T-cell (primary cell): ENCODE measurements at regions of chr5 and their contacts with region 1.

Region 1: DNA sequence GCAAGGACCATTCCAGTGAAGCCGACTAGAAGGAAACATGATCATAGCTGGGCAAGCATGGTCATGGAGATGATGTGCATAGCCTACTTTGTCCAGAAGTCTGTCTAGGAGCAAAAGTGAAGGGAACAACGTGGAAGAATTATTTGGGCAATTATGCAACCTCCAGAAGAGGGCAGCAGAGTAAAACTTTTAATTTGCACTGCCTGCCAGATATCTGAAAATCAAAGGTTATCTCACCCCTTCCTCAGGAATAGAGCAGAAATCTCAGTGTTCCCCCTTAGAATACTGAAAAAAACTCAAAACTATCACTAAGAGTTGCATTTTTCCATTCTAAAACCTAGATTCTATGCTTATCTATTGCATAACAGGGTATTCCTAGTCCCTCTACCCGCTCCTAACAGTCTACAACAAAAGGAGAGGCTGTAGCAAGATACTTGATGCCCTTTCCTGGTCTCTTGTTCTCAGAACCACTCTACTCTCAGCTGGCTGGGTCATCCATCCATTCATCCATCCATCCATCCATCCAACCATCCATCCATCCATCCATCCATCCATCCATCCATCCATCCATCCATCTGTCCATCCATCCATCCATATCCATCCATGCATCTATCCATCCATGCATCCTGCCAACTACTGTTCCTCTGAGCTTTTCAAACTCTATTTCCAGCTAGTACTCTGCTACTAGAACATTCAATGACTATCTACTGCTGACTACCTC is 8.4 kb upstream of the SETD9 start:
- DNase-seq: peak in 15 of 35 experiments; percentile 4 to 75 (median 19)
- ATAC-seq: peak; percentile 35 to 70 (median 60)
- H3K4me3 ChIP-seq: no peak overlapping the region
- H3K4me3 Mint-ChIP-seq: no peak overlapping the region
- H3K27ac ChIP-seq: no peak overlapping the region
- H3K27ac Mint-ChIP-seq: no peak overlapping the region
- H3K4me1 ChIP-seq: peaks cover 0 to 2% of the 10 kb centered on the region in 2 experiments
- H3K4me1 Mint-ChIP-seq: peaks cover 0 to 2% (median 0%) of the 10 kb centered on the region in 3 donors
- H3K27me3 ChIP-seq: no peaks in the 10 kb centered on the region
- H3K27me3 Mint-ChIP-seq: no peaks in the 10 kb centered on the region

Region 2: DNA sequence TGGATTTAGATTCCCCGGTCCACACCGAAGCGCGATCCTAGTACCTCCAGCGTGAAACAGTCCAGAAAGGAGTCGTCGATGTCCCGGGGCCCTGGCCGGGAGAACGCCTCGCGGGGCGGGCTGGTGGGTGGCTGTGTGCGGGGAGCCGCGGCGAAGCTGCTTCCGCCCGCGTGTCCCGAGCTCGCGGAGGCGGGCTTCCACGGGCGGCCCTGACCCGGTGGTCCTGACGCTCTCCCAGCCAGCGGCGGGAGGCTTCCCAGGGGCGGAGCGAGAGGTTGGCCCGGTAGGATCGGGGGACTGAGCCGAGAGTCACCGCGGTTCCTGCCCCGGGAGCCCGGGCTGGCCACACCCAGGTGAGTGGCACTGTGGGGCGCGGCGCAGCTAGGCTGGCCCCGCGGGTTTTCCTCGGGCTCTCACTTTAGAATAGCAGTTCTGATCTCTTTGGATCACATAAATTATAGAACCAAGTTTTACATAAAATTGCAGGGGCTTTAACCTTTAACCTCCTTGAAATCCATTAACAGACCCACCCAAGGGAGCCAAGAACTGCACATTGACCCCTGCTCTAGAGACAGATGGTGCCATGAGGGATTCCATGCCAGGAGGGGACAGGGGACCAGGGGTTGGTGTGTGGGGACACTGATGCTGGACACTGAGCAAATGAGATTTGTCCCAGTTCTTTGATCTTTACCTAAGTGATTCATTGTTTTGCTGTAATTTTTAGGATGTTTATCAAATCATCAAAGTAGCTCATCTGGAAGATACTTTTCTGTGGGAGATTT is 1079.1 kb before region 1 on chr5:
- CTCF ChIA-PET with region 1: no interaction called
- POLR2A ChIA-PET with region 1: no interaction called
- DNase-seq: peak in 15 of 35 experiments; percentile 1 to 12 (median 4)
- ATAC-seq: peak in 3 of 4 experiments; percentile 45 to 58 (median 51)
- H3K4me3 ChIP-seq: peak overlapping the region; percentile 23 to 58
- H3K4me3 Mint-ChIP-seq: peak overlapping the region; percentile 22 to 45 (median 43)
- H3K27ac ChIP-seq: no peak overlapping the region
- H3K27ac Mint-ChIP-seq: no peak overlapping the region
- H3K4me1 ChIP-seq: peaks cover 2 to 7% of the 10 kb centered on the region in 2 experiments
- H3K4me1 Mint-ChIP-seq: peaks cover 6 to 11% (median 9%) of the 10 kb centered on the region in 3 donors
- H3K27me3 ChIP-seq: peaks cover 0 to 14% of the 10 kb centered on the region in 2 experiments
- H3K27me3 Mint-ChIP-seq: peaks cover 51 to 56% of the 10 kb centered on the region in 2 donors

Region 3: DNA sequence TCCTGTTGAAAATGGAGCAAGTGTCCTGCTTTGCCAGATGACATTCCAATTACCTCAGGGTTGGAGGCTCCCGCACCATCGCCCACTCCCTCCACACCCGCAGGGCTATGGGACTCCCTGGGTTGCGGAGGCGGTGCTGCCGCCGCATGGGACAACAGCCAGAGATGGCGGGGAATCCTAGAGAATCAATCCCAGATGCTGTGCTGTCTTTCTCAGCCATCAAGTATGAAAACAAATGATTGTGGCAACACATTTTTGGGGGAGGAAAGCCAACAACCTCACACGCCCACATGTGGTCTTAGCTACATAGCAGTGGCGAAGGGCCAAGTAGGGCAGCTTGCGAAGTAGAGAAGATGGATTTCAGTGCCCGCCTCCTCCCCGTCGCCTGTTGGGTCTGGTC is 1003.1 kb before region 1 on chr5:
- CTCF ChIA-PET with region 1: no interaction called
- POLR2A ChIA-PET with region 1: interaction called in 1 of 2 experiments, 10 read pairs
- DNase-seq: peak in 2 of 35 experiments; percentile 3 to 22
- ATAC-seq: no peak
- H3K4me3 ChIP-seq: no peak overlapping the region
- H3K4me3 Mint-ChIP-seq: no peak overlapping the region
- H3K27ac ChIP-seq: no peak overlapping the region
- H3K27ac Mint-ChIP-seq: no peak overlapping the region
- H3K4me1 ChIP-seq: peaks cover 0 to 10% of the 10 kb centered on the region in 2 experiments
- H3K4me1 Mint-ChIP-seq: peaks cover 8 to 17% (median 11%) of the 10 kb centered on the region in 3 donors
- H3K27me3 ChIP-seq: peaks cover 0 to 16% of the 10 kb centered on the region in 2 experiments
- H3K27me3 Mint-ChIP-seq: peaks cover 4 to 10% of the 10 kb centered on the region in 2 donors

Region 4: GRCh38 chr5:56543441-56544390 is 357.3 kb before region 1 on chr5:
- CTCF ChIA-PET with region 1: no interaction called
- POLR2A ChIA-PET with region 1: interaction called in 1 of 2 experiments, 11 read pairs
- DNase-seq: no peak
- ATAC-seq: no peak
- H3K4me3 ChIP-seq: no peak overlapping the region
- H3K4me3 Mint-ChIP-seq: no peak overlapping the region
- H3K27ac ChIP-seq: no peak overlapping the region
- H3K27ac Mint-ChIP-seq: peak overlapping the region in 1 of 2 donors; percentile 5
- H3K4me1 ChIP-seq: peaks cover 4% of the 10 kb centered on the region in 2 experiments
- H3K4me1 Mint-ChIP-seq: peaks cover 9 to 11% (median 10%) of the 10 kb centered on the region in 3 donors
- H3K27me3 ChIP-seq: no peaks in the 10 kb centered on the region
- H3K27me3 Mint-ChIP-seq: no peaks in the 10 kb centered on the region

Region 5: DNA sequence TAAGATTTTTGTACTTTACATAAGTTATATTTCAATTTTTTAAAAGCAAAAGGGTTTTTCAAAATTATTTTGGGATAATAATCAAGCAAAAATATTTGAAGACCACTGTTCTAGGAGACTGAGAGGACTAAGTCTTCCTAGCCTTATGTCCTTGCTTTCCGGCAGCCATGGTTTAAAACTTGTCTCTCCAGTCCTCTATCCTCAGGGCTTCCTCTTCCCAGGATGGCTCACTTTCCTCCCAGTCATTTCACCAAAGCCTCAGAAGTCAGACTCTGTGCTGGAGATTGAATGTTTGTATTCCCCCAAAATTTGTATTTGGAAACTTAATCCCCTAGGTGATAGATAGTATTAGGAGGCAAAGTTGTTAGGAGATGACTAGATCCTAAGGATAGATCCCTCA is 65.5 kb after region 1 on chr5:
- CTCF ChIA-PET with region 1: no interaction called
- POLR2A ChIA-PET with region 1: no interaction called
- DNase-seq: no peak
- ATAC-seq: no peak
- H3K4me3 ChIP-seq: no peak overlapping the region
- H3K4me3 Mint-ChIP-seq: no peak overlapping the region
- H3K27ac ChIP-seq: no peak overlapping the region
- H3K27ac Mint-ChIP-seq: no peak overlapping the region
- H3K4me1 ChIP-seq: no peaks in the 10 kb centered on the region
- H3K4me1 Mint-ChIP-seq: no peaks in the 10 kb centered on the region
- H3K27me3 ChIP-seq: peaks cover 0 to 15% of the 10 kb centered on the region in 2 experiments
- H3K27me3 Mint-ChIP-seq: peaks cover 22 to 34% of the 10 kb centered on the region in 2 donors

Region 6: GRCh38 chr5:56986626-56986947 is 85.6 kb after region 1 on chr5:
- CTCF ChIA-PET with region 1: no interaction called
- POLR2A ChIA-PET with region 1: no interaction called
- DNase-seq: no peak
- ATAC-seq: no peak
- H3K4me3 ChIP-seq: no peak overlapping the region
- H3K4me3 Mint-ChIP-seq: no peak overlapping the region
- H3K27ac ChIP-seq: no peak overlapping the region
- H3K27ac Mint-ChIP-seq: no peak overlapping the region
- H3K4me1 ChIP-seq: peaks cover 3 to 4% of the 10 kb centered on the region in 2 experiments
- H3K4me1 Mint-ChIP-seq: peaks cover 11 to 18% (median 17%) of the 10 kb centered on the region in 3 donors
- H3K27me3 ChIP-seq: no peaks in the 10 kb centered on the region
- H3K27me3 Mint-ChIP-seq: no peaks in the 10 kb centered on the region

Region 7: DNA sequence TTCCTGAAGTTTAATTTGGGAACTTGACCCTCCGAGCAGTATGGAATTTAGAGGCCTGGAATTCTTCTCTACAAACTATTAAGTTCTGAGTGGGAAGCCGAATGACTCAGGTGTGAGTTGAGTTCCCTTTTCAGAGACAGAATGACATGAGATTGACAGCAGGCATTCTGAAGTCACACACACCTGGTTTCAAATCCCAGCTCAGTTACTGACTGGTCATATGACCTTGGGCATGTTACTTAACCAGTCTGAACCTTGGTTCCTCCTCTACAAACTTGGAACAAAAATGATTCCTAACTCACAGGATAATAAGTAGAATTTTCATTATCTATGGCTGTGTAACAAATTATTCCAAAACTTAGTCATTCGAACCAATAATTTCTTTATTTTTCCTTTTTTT is 227.3 kb after region 1 on chr5:
- CTCF ChIA-PET with region 1: no interaction called
- POLR2A ChIA-PET with region 1: no interaction called
- DNase-seq: no peak
- ATAC-seq: no peak
- H3K4me3 ChIP-seq: no peak overlapping the region
- H3K4me3 Mint-ChIP-seq: no peak overlapping the region
- H3K27ac ChIP-seq: no peak overlapping the region
- H3K27ac Mint-ChIP-seq: no peak overlapping the region
- H3K4me1 ChIP-seq: no peaks in the 10 kb centered on the region
- H3K4me1 Mint-ChIP-seq: no peaks in the 10 kb centered on the region
- H3K27me3 ChIP-seq: no peaks in the 10 kb centered on the region
- H3K27me3 Mint-ChIP-seq: no peaks in the 10 kb centered on the region

Region 8: DNA sequence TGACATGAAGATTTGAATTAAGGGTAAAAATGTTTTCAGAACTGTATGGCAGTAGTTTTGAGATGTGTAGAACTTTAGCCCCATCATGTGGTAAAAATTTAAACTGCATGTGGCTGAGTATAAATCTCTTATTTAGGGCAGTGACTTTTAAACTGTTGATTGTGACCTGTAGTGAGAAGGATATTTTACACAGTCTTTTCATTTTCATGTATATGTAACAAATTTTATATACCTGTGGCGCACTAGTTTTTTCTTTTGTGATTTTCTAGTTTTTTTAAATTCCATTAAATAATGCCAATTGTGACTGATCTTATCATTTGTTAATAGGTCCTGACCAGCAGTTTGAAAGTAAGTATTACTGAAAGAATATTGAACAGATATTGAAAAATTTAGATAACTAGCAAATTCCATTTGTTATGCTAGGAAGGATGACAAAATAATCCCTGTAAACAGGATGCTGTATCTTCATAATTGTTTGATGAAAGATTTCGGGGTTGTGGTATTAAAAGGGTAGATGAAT is 320.1 kb after region 1 on chr5:
- CTCF ChIA-PET with region 1: interaction called, 14 to 22 read pairs
- POLR2A ChIA-PET with region 1: no interaction called
- DNase-seq: peak in 7 of 35 experiments; percentile 10 to 87 (median 16)
- ATAC-seq: peak; percentile 64 to 69 (median 68)
- H3K4me3 ChIP-seq: no peak overlapping the region
- H3K4me3 Mint-ChIP-seq: peak overlapping the region in 1 of 3 donors; percentile 33
- H3K27ac ChIP-seq: peak overlapping the region; percentile 5
- H3K27ac Mint-ChIP-seq: peak overlapping the region; percentile 71 to 75
- H3K4me1 ChIP-seq: peaks cover 0 to 11% of the 10 kb centered on the region in 2 experiments
- H3K4me1 Mint-ChIP-seq: peaks cover 41 to 54% (median 53%) of the 10 kb centered on the region in 3 donors
- H3K27me3 ChIP-seq: no peaks in the 10 kb centered on the region
- H3K27me3 Mint-ChIP-seq: no peaks in the 10 kb centered on the region